ENCODE measurements at regions of chr17 and their contacts with region 1.

Region 1: DNA sequence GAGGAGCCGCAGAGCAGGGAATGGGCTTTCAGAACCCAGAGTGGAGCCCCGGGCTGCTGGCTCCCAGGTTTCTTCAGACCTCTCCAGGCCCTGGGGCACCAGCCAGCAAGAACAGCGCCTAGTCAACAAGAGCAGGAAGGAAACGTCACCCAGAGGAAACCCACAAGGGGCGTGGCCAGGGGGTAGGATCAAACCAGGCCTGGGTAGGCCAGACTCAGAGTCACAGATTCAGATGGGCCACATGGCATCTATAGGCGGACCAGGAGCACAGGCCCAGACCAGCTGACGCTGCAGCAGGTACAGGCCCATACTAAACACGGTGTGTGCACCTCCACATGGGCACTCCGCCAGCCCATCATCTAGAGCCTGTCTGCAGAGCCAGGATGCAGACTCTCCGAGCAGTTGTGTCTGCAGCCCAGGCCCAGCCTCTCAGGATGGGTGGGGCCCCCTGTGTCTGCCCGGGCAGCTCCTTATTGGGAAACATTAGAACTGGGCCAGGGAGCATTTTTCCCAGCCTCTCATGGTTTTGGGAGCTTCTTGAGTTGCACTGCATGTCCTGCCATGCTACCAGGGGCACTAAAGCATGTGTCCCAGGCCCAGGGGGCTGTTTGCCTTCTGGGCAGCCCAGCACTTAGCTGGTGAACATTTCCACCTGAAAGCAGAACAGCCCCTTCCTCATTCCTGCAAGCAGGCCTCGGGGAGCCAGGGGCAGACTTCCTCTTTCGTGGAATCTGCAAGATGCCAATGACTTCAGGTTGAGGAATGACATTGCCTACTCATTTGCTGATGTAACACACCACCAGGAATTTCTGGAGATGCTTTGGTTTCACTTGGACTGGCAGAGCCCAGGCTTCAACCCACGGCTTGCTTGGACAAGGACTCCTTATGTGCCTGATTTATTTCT is at the start of gene NLRP1:
- DNase-seq: peak; percentile 96
- H3K4me3 ChIP-seq: peak within 1 kb of the TSS; percentile 68
- H3K27ac ChIP-seq: peak within 1 kb of the TSS; percentile 48
- H3K4me1 ChIP-seq: peaks cover 26% of the 10 kb centered on the region
- CTCF ChIP-seq: no peak
- total RNA-seq, gene NLRP1: 14.3 and 18.7 TPM in 2 replicates

Region 2: DNA sequence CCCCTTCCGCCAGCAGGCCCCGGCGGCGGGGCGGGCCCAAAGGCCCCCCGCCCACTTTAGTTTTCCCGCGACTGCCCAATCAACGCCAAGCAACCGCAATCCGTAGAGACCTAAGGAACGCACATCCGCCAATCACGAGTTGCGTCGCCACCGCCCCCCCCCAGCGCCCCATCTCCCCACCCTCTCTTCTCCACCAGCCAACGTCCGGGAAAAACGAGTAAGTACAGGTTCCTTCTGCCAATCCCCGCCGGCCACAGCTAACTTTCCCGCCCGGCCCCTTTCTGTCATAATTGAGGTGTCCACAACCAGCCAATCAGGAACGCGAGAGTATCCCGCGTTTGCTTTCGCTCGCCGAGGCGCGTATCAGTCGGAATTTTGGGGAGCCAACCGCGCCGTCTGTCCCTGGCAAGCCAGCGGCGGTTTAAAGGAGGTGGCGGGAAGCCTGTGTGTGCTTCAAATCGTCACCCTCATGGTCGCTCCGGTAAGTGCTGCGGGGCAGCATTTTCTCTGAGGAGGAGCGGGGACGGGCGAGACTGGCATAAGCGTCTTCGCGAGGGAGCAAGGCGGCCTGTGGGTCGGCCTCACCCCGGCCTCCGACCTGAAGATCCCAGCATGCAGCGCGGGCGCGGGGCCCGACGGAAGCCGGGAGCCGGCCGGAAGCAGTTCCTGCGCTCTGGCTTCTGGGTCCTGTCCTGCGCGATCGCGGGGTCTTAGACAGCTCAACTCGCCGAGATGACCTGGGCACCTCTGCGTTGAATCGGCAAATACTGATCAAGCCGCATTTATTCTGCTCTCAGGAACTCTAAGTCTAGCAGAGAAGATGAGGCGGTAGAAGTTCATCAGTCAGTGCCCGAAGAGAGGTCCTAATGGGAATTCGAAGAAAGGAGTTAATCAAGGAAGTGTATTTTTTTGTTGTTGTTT is 98.2 kb before region 1 on chr17 and contains the start of gene MIS12:
- CTCF ChIA-PET with region 1: no interaction called
- POLR2A ChIA-PET with region 1: no interaction called
- intact Hi-C with region 1: loop called (anchors 5 kb)
- DNase-seq: peak; percentile 99
- H3K4me3 ChIP-seq: peak within 1 kb of the TSS; percentile 85
- H3K27ac ChIP-seq: peak within 1 kb of the TSS; percentile 89
- H3K4me1 ChIP-seq: peaks cover 28% of the 10 kb centered on the region
- CTCF ChIP-seq: no peak
- total RNA-seq, gene MIS12: 21.0 and 26.4 TPM in 2 replicates

Region 3: GRCh38 chr17:6421700-6422604 is 837.3 kb after region 1 on chr17:
- CTCF ChIA-PET with region 1: no interaction called
- POLR2A ChIA-PET with region 1: no interaction called
- intact Hi-C with region 1: loop called (anchors 1 kb)
- DNase-seq: peak; percentile 73
- H3K4me3 ChIP-seq: no peak overlapping the region
- H3K27ac ChIP-seq: no peak overlapping the region
- H3K4me1 ChIP-seq: no peaks in the 10 kb centered on the region
- CTCF ChIP-seq: peak; percentile 88

Region 4: DNA sequence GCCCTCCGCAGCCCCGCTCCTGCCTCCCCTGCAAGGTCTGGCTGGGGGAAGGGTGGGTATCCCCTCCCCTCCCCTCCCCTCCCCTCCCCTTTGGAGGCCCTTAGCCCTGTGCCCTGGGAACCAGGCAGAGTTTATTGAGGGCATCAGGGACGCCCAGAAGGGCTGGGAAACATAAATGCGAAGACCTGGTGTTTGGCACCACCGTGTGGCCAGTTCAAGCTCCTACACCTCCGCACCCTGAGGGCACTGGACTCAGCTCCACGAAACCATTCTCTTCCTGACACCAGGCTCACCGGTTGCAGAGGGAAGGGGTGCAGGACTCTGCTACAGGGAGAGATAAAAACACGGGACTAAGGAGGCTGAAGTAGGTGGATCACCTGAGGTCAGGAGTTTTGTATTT is 851.3 kb after region 1 on chr17:
- CTCF ChIA-PET with region 1: no interaction called
- POLR2A ChIA-PET with region 1: no interaction called
- intact Hi-C with region 1: loop called (anchors 5 kb)
- DNase-seq: peak; percentile 71
- H3K4me3 ChIP-seq: no peak overlapping the region
- H3K27ac ChIP-seq: no peak overlapping the region
- H3K4me1 ChIP-seq: peaks cover 15% of the 10 kb centered on the region
- CTCF ChIP-seq: peak; percentile 83